ENCODE measurements at regions of chr15 and their contacts with region 1.

Region 1: DNA sequence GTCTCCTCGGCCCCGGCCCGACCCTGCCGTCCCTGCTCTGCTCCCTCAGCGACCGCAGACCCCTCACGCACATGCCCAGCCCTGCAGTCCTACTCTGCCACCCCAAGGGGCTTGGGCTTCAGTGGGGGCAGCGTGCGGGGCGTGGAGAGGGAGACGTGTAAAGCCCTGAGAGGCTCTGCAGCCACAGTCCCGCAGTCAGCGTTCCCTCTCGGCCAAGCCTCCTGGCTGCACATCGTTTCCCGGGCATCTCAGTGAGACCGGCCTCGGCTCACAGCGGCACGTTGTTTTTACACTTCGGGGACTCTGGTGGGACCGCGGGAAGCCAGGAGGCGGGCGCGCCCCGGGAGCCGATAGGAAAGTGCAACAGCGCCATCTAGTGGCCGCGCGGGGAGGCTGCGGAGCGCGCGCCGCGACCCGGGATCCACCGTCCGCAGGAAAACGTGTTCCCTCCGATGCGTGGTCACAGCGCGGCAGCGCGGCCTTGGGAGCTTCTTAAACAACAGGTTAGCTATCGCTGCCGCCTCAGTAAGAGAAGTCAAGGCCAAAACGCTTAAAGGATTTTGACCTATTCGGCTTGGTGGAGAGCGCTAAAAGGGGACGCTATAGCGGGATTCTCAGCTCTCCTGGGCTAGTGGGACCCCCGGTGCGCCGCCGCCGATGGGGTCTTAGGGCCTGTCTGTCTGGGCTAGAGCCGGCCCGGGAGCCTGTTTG is 226.8 kb upstream of the IGF1R start:
- DNase-seq: peak; percentile 27 to 70
- H3K4me3 ChIP-seq: peak overlapping the region in 2 of 3 donors; percentile 36 to 61
- H3K27ac ChIP-seq: no peak overlapping the region
- H3K4me1 ChIP-seq: peaks cover 0 to 7% of the 10 kb centered on the region in 2 donors
- H3K27me3 ChIP-seq: peaks cover 0 to 30% of the 10 kb centered on the region in 2 donors
- CTCF ChIP-seq: peak; percentile 92 to 95 (median 92)
- POLR2A ChIP-seq: no peak

Region 2: GRCh38 chr15:98321896-98322295 is 99.7 kb before region 1 on chr15:
- intact Hi-C with region 1: loop called (anchors 5 kb)
- DNase-seq: peak in 1 of 2 donors; percentile 62
- H3K4me3 ChIP-seq: no peak overlapping the region
- H3K27ac ChIP-seq: peak overlapping the region; percentile 41 to 57
- H3K4me1 ChIP-seq: no peaks in the 10 kb centered on the region
- H3K27me3 ChIP-seq: no peaks in the 10 kb centered on the region
- CTCF ChIP-seq: no peak
- POLR2A ChIP-seq: no peak